AG04450 (cell line): ENCODE measurements at regions of chr5 and their contacts with region 1.

Region 1: GRCh38 chr5:36241631-36242533 is at the start of gene NADK2:
- DNase-seq: peak; percentile 82
- H3K4me3 ChIP-seq: peak within 1 kb of the TSS; percentile 73
- H3K27ac ChIP-seq: peak within 1 kb of the TSS; percentile 91
- H3K27me3 ChIP-seq: no peaks in the 10 kb centered on the region
- CTCF ChIP-seq: peak; percentile 63
- polyA plus RNA-seq, gene NADK2: 13.0 and 18.5 TPM in 2 replicates

Region 2: GRCh38 chr5:35789732-35790456 is 452.0 kb before region 1 on chr5:
- CTCF ChIA-PET with region 1: no interaction called
- POLR2A ChIA-PET with region 1: no interaction called
- DNase-seq: no peak
- H3K4me3 ChIP-seq: no peak overlapping the region
- H3K27ac ChIP-seq: no peak overlapping the region
- H3K27me3 ChIP-seq: no peaks in the 10 kb centered on the region
- CTCF ChIP-seq: no peak

Region 3: DNA sequence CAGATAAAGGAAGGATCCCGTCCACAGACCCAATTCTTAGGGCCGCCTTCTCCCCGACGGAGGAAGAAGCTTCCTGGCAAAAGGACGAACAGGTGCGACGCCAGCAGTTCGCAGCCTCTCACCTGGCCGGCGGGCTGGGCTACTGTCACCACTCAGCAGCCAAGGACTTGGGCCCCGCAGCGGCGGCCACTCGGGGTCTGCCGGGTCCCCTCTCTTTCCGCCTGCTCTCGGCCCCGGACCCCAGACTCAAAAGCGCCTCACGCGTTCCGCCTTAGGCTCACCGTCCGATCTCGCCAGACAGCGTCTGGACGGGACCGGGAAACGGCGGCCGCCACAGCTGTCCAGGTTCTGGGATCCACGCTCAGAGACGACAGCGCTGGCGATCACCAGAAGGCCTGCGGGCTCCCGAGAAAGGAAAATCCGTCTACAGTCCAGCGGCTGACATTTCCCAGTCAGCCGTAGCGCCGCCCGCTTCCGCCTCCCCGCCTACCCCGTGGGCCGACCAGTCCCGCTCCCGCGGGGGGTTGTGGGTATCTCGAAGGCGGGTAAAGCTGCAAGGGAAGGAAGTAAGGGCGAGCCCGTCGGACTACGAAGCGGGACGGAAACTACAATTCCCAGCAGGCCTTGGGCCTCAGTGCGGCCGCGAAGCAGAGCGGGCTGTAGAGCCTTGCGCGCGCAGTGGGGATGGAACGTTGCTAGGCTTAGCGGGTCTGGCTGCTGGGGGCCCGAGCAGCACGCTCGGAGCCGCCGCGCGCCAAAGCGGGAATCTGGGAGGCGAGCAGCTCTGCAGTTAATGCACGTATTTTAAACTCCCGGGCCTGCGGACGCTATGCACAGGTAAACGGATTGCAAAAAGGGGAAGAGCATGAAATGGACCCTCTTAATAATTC is 90.2 kb before region 1 on chr5 and contains the starts of genes LMBRD2 and SKP2:
- CTCF ChIA-PET with region 1: interaction called, 11 read pairs
- POLR2A ChIA-PET with region 1: interaction called, 5 read pairs
- DNase-seq: peak; percentile 94
- H3K4me3 ChIP-seq: peak within 1 kb of the TSS; percentile 84
- H3K27ac ChIP-seq: no peak within 1 kb of the TSS
- H3K27me3 ChIP-seq: no peaks in the 10 kb centered on the region
- CTCF ChIP-seq: no peak
- polyA plus RNA-seq, gene LMBRD2: 4.1 and 5.3 TPM in 2 replicates
- polyA plus RNA-seq, gene SKP2: 21.6 and 24.6 TPM in 2 replicates

Region 4: DNA sequence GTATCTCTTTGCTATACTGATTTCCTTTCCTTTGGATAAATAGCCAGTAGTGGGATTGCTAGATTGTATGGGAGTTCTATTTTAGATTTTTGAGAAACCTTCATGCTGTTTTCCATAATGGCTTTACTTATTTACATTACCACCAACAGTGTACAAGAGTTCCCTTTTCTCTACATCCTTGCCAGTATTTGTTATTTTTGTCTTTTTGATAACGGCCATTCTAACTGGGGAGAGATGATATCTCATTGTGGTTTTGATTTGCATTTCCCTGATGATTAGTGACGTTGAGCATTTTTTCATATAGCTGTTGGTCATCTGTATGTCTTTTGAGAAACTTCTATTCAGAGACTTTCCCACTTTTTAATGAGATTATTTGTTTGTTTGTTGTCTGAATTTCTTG is 26.0 kb before region 1 on chr5:
- CTCF ChIA-PET with region 1: interaction called, 10 read pairs
- POLR2A ChIA-PET with region 1: interaction called, 5 read pairs
- DNase-seq: no peak
- H3K4me3 ChIP-seq: no peak overlapping the region
- H3K27ac ChIP-seq: no peak overlapping the region
- H3K27me3 ChIP-seq: no peaks in the 10 kb centered on the region
- CTCF ChIP-seq: no peak

Region 5: GRCh38 chr5:36252722-36253365 is 11.0 kb after region 1 on chr5:
- CTCF ChIA-PET with region 1: interaction called, 12 read pairs
- POLR2A ChIA-PET with region 1: no interaction called
- DNase-seq: no peak
- H3K4me3 ChIP-seq: no peak overlapping the region
- H3K27ac ChIP-seq: no peak overlapping the region
- H3K27me3 ChIP-seq: no peaks in the 10 kb centered on the region
- CTCF ChIP-seq: no peak

Region 6: DNA sequence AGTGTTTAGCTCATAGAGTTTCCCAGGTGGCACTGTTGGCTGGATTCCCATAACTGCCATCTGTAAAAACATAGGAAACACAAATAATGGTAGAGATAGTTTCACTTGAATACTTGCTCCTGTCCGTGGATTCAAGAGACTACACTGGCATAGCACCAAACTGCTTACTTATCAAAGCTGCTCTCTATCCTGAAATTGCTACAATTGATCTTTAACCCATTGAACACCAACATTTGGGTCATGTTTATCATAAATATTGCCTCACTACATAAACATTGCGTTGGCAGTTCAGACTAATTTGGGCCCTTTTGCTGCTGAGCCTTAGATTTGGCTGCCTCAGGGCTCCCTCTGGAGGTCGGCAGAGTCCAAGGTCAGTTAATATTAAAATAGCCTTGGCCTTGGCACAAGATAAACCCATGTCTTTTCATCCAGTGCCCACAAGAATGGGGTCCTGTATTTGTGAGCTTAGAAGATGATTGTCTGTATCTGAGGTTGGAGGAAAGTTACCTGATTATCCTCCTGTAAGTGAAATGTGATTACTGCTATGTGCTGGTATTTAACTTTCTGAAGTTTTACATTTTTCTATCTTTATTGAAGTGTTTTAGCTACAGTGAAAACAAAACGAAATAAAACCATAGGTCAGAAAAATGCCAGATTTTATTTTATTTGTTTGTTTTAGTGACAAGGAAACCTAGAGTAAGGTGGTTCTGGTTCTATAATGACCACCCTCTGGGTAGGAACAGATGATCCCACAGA is 63.9 kb after region 1 on chr5:
- CTCF ChIA-PET with region 1: interaction called, 11 read pairs
- POLR2A ChIA-PET with region 1: interaction called, 3 read pairs
- DNase-seq: no peak
- H3K4me3 ChIP-seq: no peak overlapping the region
- H3K27ac ChIP-seq: no peak overlapping the region
- H3K27me3 ChIP-seq: no peaks in the 10 kb centered on the region
- CTCF ChIP-seq: peak; percentile 85

Region 7: DNA sequence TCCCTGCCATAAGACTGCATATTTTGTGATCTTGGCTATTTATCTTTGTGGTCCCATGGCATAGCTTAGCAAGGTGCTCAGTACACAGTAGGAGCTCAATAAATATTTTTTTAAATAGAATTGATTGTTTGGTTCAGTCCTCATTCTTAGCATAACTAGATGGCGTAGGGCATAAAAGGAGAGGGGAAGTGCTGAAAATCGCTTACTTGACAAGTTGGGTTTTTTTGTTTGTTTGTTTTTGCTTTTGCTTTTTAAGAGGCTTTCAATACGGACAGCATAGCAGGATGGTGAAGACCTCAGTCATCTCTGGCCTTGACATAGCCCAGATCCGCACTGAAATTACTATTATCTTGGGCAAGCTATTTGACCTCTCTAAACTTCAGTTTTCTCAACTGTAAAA is 146.4 kb after region 1 on chr5:
- CTCF ChIA-PET with region 1: no interaction called
- POLR2A ChIA-PET with region 1: no interaction called
- DNase-seq: no peak
- H3K4me3 ChIP-seq: no peak overlapping the region
- H3K27ac ChIP-seq: no peak overlapping the region
- H3K27me3 ChIP-seq: peaks cover 4% of the 10 kb centered on the region
- CTCF ChIP-seq: no peak